GM12878 (cell line): ENCODE measurements at regions of chr3 and their contacts with region 1.

Region 1: DNA sequence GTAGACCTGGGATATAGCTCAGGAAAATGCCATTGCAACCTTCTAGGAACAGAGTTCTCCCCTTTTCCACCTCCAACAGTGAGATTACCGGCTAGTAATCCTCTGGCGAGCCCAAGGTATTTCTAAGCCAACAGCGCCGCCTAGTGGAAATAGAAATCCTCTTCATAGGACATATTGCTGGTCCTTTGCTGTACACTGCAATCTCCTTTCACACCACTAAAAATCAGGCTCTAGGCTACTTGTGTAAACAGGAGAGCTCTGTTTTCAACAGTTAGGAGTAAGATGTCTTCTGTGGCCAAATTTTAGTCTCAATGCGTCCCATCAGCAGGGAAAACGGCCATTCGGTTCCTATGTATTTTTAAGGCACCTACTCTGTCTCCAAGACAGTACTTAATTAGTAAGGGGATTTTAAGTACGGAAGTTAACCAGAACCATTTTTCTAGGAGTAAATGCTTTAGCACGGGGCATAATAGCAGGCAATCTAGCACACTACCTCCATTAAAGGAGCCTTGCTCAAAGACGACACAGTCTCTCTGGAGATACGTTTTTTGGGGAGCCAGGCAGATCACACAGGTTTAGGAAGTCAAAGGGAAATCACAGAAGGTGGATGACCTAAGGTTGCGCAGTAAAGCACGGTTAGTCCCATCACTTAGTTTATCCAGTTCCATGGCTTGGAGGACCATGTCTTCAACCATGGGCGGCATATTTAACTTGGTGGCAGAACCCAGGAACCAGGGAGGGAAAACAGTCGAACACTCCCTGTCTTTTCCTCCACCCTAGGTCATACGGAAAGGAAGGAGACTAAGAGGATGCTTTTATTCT is 43.8 kb downstream of the NCEH1 start:
- DNase-seq: no peak
- ATAC-seq: peak; percentile 100
- H3K4me3 ChIP-seq: no peak overlapping the region
- H3K27ac ChIP-seq: no peak overlapping the region
- H3K4me1 ChIP-seq: no peaks in the 10 kb centered on the region
- H3K27me3 ChIP-seq: no peaks in the 10 kb centered on the region
- CTCF ChIP-seq: peak; percentile 86 to 96 (median 95)
- EP300 ChIP-seq: no peak
- POLR2A ChIP-seq: no peak
- RAD21 ChIP-seq: peak; percentile 95

Region 2: GRCh38 chr3:172332256-172333041 is 334.6 kb before region 1 on chr3:
- CTCF ChIA-PET with region 1: interaction called, 20 read pairs
- POLR2A ChIA-PET with region 1: no interaction called
- RAD21 ChIA-PET with region 1: interaction called, 6 read pairs
- SMC1A ChIA-PET with region 1: interaction called, 6 read pairs
- in situ Hi-C with region 1: loop called (anchors 25 kb)
- intact Hi-C with region 1: loop called (anchors 2 kb)
- DNase-seq: no peak
- ATAC-seq: peak; percentile 97
- H3K4me3 ChIP-seq: no peak overlapping the region
- H3K27ac ChIP-seq: no peak overlapping the region
- H3K4me1 ChIP-seq: no peaks in the 10 kb centered on the region
- H3K27me3 ChIP-seq: no peaks in the 10 kb centered on the region
- CTCF ChIP-seq: peak; percentile 81 to 90 (median 88)
- EP300 ChIP-seq: no peak
- POLR2A ChIP-seq: no peak
- RAD21 ChIP-seq: peak; percentile 63

Region 3: GRCh38 chr3:172461530-172462138 is 205.4 kb before region 1 on chr3:
- CTCF ChIA-PET with region 1: interaction called, 11 read pairs
- POLR2A ChIA-PET with region 1: no interaction called
- RAD21 ChIA-PET with region 1: interaction called, 4 read pairs
- SMC1A ChIA-PET with region 1: interaction called, 4 read pairs
- in situ Hi-C with region 1: no loop called
- intact Hi-C with region 1: no loop called
- DNase-seq: no peak
- ATAC-seq: peak; percentile 84
- H3K4me3 ChIP-seq: no peak overlapping the region
- H3K27ac ChIP-seq: no peak overlapping the region
- H3K4me1 ChIP-seq: no peaks in the 10 kb centered on the region
- H3K27me3 ChIP-seq: no peaks in the 10 kb centered on the region; a peak in 2 of 4 replicates
- CTCF ChIP-seq: peak; percentile 68 to 93 (median 91)
- EP300 ChIP-seq: no peak
- POLR2A ChIP-seq: no peak
- RAD21 ChIP-seq: peak; percentile 59

Region 4: DNA sequence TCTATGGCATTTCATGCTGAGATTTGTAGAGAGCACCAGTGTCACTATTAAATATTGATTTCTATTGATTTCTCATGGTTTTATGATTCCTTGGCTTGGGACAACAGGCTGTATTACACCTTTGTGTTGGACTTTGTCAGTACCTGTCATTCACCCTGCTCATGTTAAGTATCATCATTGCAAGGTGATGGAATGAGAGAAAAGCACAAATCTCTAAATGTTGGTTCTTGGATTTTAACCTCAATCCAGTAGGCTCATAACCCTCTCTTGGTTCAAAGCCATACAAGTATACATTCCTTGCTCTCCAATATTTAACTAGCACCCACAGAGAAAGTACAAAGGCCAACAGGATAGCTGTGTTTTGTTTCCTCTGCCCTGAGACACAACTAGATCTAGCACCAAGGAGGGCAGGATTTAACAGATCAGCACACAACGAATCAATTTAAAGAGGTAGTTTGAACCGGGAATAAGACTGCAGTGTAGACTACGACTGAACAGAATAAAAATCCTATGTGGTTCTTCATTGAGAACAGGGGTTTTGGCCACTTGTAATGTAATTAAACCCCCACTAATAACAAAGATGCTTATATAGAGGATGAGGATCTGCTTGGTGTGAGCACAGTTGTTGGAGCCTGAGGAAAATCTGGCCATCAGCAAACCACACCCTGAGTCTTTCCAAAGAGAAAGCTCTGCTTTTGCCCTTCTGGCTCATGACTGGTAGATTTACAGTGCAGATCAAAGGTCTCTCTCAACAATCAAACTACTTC is 65.8 kb before region 1 on chr3:
- CTCF ChIA-PET with region 1: interaction called, 33 read pairs
- POLR2A ChIA-PET with region 1: no interaction called
- RAD21 ChIA-PET with region 1: no interaction called
- SMC1A ChIA-PET with region 1: interaction called, 13 read pairs
- in situ Hi-C with region 1: no loop called
- intact Hi-C with region 1: loop called (anchors 2 kb)
- DNase-seq: no peak
- ATAC-seq: no peak
- H3K4me3 ChIP-seq: no peak overlapping the region
- H3K27ac ChIP-seq: no peak overlapping the region
- H3K4me1 ChIP-seq: no peaks in the 10 kb centered on the region
- H3K27me3 ChIP-seq: no peaks in the 10 kb centered on the region
- CTCF ChIP-seq: no peak
- EP300 ChIP-seq: no peak
- POLR2A ChIP-seq: no peak
- RAD21 ChIP-seq: no peak

Region 5: GRCh38 chr3:172635588-172635987 is 31.5 kb before region 1 on chr3:
- CTCF ChIA-PET with region 1: interaction called, 22 read pairs
- POLR2A ChIA-PET with region 1: no interaction called
- RAD21 ChIA-PET with region 1: no interaction called
- SMC1A ChIA-PET with region 1: no interaction called
- in situ Hi-C with region 1: no loop called
- intact Hi-C with region 1: no loop called
- DNase-seq: peak; percentile 43
- ATAC-seq: peak; percentile 100
- H3K4me3 ChIP-seq: no peak overlapping the region
- H3K27ac ChIP-seq: no peak overlapping the region
- H3K4me1 ChIP-seq: peaks cover 3% of the 10 kb centered on the region
- H3K27me3 ChIP-seq: no peaks in the 10 kb centered on the region
- CTCF ChIP-seq: peak in 1 of 3 experiments; percentile 37; a peak in 1 of 6 replicates
- EP300 ChIP-seq: 0 out of 4 replicates have a peak, but pooled peaks of 1 of the 2 experiments have one; percentile 26
- POLR2A ChIP-seq: no peak
- RAD21 ChIP-seq: no peak

Region 6: GRCh38 chr3:172710664-172711453 is 43.8 kb after region 1 on chr3 and contains the start of gene NCEH1:
- CTCF ChIA-PET with region 1: interaction called, 53 read pairs
- POLR2A ChIA-PET with region 1: no interaction called
- RAD21 ChIA-PET with region 1: interaction called, 3 read pairs
- SMC1A ChIA-PET with region 1: interaction called, 7 read pairs
- in situ Hi-C with region 1: no loop called
- intact Hi-C with region 1: no loop called
- DNase-seq: peak; percentile 86
- ATAC-seq: peak; percentile 99
- H3K4me3 ChIP-seq: peak within 1 kb of the TSS; percentile 67
- H3K27ac ChIP-seq: peak within 1 kb of the TSS; percentile 52
- H3K4me1 ChIP-seq: no peaks in the 10 kb centered on the region; the same call in 1 of the 2 replicates
- H3K27me3 ChIP-seq: no peaks in the 10 kb centered on the region
- CTCF ChIP-seq: peak; percentile 82 to 96 (median 91); a peak in 5 of 6 replicates
- EP300 ChIP-seq: no peak
- POLR2A ChIP-seq: peak; percentile 84
- RAD21 ChIP-seq: peak; percentile 65
- polyA plus RNA-seq, gene NCEH1: 1.8 to 2.3 TPM